ENCODE measurements at regions of chr10 and their contacts with region 1.

Region 1: DNA sequence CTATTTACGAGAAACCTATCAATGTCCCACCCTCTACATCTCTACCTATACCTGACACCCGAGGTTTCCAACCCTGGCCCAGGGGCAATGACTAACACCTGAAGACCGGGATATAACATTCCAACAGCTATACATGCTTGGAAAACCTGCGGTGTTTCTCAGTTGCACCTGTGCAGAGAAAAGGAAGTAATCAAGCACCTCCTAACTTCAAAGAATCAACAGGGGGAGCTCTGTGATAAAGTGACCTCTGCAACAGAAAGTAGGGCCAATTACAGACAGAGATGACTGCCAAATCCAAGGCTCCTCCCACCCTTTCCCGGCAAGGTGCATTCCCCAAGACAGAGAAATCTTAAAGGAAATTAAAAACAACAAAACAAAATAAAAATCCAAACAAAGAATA is 41.3 kb downstream of the CCDC6 start:
- DNase-seq: peak; percentile 69
- ATAC-seq: peak; percentile 74
- H3K4me3 ChIP-seq: no peak overlapping the region
- H3K4me3 Mint-ChIP-seq: peak overlapping the region; percentile 37
- H3K27ac ChIP-seq: peak overlapping the region in 1 of 2 donors; percentile 5
- H3K27ac Mint-ChIP-seq: peak overlapping the region; percentile 64
- H3K4me1 ChIP-seq: peaks cover 19 to 29% of the 10 kb centered on the region in 2 donors
- H3K4me1 Mint-ChIP-seq: peaks cover 63% of the 10 kb centered on the region
- H3K27me3 ChIP-seq: no peaks in the 10 kb centered on the region
- H3K27me3 Mint-ChIP-seq: no peaks in the 10 kb centered on the region
- CTCF ChIP-seq: peak; percentile 75

Region 2: GRCh38 chr10:59830601-59831259 is 34.4 kb before region 1 on chr10:
- CTCF ChIA-PET with region 1: interaction called, 70 read pairs
- POLR2A ChIA-PET with region 1: interaction called, 3 read pairs
- intact Hi-C with region 1: loop called (anchors 5 kb)
- DNase-seq: peak; percentile 54
- ATAC-seq: no peak
- H3K4me3 ChIP-seq: no peak overlapping the region
- H3K4me3 Mint-ChIP-seq: no peak overlapping the region
- H3K27ac ChIP-seq: no peak overlapping the region
- H3K27ac Mint-ChIP-seq: no peak overlapping the region
- H3K4me1 ChIP-seq: peaks cover 24 to 36% of the 10 kb centered on the region in 2 donors
- H3K4me1 Mint-ChIP-seq: peaks cover 72% of the 10 kb centered on the region
- H3K27me3 ChIP-seq: no peaks in the 10 kb centered on the region
- H3K27me3 Mint-ChIP-seq: no peaks in the 10 kb centered on the region
- CTCF ChIP-seq: peak; percentile 75

Region 3: GRCh38 chr10:59885430-59886134 is 20.5 kb after region 1 on chr10:
- CTCF ChIA-PET with region 1: interaction called, 8 read pairs
- POLR2A ChIA-PET with region 1: no interaction called
- intact Hi-C with region 1: loop called (anchors 2 kb)
- DNase-seq: peak; percentile 90
- ATAC-seq: peak; percentile 96
- H3K4me3 ChIP-seq: peak overlapping the region in 3 of 5 experiments; percentile 0 to 47 (median 11)
- H3K4me3 Mint-ChIP-seq: peak overlapping the region; percentile 62
- H3K27ac ChIP-seq: peak overlapping the region in 1 of 2 donors; percentile 42
- H3K27ac Mint-ChIP-seq: peak overlapping the region; percentile 79
- H3K4me1 ChIP-seq: peaks cover 67 to 76% of the 10 kb centered on the region in 2 donors
- H3K4me1 Mint-ChIP-seq: peaks cover 87% of the 10 kb centered on the region
- H3K27me3 ChIP-seq: no peaks in the 10 kb centered on the region
- H3K27me3 Mint-ChIP-seq: no peaks in the 10 kb centered on the region
- CTCF ChIP-seq: no peak

Region 4: DNA sequence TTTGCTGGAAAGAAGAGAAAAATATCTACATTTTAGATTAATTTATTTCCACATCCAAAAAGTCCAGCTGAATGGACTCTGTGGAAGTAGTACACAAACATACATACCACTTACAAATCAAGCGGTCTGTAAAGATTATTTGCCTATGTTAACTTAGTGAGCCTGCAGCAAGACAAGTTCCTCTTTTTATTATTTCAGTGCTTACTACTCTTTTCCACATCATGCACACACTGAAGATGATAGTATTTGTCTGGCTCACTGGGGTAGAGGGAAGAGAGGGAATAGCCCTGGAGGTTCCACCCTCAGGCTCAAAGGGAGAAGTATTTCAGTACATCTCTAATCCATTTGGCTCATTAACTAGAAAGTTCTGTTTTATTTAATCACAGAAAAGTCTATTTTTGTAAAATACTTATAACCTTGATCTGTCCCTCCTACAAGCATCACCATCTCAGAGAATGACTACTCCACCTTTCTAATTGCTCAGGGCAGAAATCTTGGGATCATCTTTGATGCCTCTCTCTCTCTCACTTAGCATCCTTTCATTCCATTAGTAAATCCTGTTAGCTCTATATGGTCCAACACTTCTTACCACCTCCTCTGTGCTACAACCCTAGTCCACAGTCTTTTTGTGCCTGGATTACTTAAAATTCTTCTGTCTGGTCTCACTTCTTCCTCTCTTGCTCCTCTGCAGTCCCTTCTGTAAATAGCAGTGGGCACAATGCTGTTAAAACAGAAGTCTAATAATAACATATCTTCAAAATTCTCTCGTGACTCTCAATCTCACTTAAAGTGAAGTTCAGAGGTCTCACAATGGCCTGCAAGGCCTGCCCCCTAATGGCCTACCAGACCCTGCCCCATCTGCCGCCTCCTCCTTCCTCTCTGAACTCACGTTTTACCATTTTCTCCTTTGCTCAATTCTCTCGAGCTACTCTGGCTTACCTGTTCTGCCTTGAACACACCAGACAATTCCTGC is 105.6 kb after region 1 on chr10:
- CTCF ChIA-PET with region 1: interaction called, 14 read pairs
- POLR2A ChIA-PET with region 1: no interaction called
- intact Hi-C with region 1: no loop called
- DNase-seq: peak; percentile 50
- ATAC-seq: peak; percentile 79
- H3K4me3 ChIP-seq: no peak overlapping the region
- H3K4me3 Mint-ChIP-seq: no peak overlapping the region
- H3K27ac ChIP-seq: peak overlapping the region; percentile 43 to 65
- H3K27ac Mint-ChIP-seq: no peak overlapping the region
- H3K4me1 ChIP-seq: peaks cover 13 to 19% of the 10 kb centered on the region in 2 donors
- H3K4me1 Mint-ChIP-seq: peaks cover 2% of the 10 kb centered on the region
- H3K27me3 ChIP-seq: no peaks in the 10 kb centered on the region
- H3K27me3 Mint-ChIP-seq: no peaks in the 10 kb centered on the region
- CTCF ChIP-seq: no peak

Region 5: GRCh38 chr10:60099998-60100747 is 235.1 kb after region 1 on chr10:
- CTCF ChIA-PET with region 1: interaction called, 17 read pairs
- POLR2A ChIA-PET with region 1: no interaction called
- intact Hi-C with region 1: no loop called
- DNase-seq: peak; percentile 61
- ATAC-seq: peak; percentile 49
- H3K4me3 ChIP-seq: no peak overlapping the region
- H3K4me3 Mint-ChIP-seq: no peak overlapping the region
- H3K27ac ChIP-seq: no peak overlapping the region
- H3K27ac Mint-ChIP-seq: no peak overlapping the region
- H3K4me1 ChIP-seq: no peaks in the 10 kb centered on the region
- H3K4me1 Mint-ChIP-seq: no peaks in the 10 kb centered on the region
- H3K27me3 ChIP-seq: no peaks in the 10 kb centered on the region
- H3K27me3 Mint-ChIP-seq: peaks cover 4% of the 10 kb centered on the region
- CTCF ChIP-seq: peak; percentile 89